OCI-LY7 (cell line): ENCODE measurements at regions of chr3 and their contacts with region 1.

Region 1: DNA sequence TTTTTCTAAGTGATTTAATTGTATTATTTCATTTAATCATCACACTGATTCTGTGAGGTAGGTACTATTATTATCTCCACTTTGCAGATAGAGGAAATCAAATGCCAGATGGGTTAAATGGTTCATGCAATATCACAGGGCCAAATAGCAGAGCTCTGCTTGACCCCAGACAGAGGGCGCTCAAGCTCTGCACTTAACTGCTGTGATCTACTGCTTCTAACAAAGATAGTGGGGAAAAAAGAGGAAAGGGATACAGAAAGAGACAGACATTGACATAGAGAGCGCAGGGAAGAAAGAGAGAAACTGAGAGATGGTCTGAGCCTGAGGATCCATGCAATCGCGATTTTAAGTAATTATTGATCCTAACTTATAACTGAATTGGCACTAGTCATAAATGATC is 279.1 kb upstream of the THRB start:
- DNase-seq: peak; percentile 42
- H3K4me3 ChIP-seq: no peak overlapping the region
- H3K27ac ChIP-seq: no peak overlapping the region
- H3K4me1 ChIP-seq: no peaks in the 10 kb centered on the region
- CTCF ChIP-seq: peak; percentile 84

Region 2: DNA sequence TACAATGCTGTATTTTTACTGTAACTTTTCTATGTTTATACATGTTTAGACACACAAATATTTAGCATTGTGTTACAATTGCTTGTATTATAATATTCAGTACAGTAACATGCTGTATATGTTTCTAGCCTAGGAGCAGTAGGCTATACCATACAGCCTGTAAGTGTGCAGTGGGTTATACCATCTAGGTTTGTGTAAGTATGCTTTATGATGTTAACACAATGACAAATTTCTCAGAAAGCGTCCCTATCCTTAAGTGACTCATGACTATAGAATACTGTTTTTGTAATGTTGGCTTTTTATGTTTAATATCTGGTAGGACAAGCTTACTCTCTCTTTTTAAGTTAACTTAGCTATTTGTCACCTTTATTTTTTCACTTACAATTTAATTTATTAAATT is 151.7 kb before region 1 on chr3:
- CTCF ChIA-PET with region 1: no interaction called
- POLR2A ChIA-PET with region 1: no interaction called
- intact Hi-C with region 1: no loop called
- DNase-seq: no peak
- H3K4me3 ChIP-seq: no peak overlapping the region
- H3K27ac ChIP-seq: no peak overlapping the region
- H3K4me1 ChIP-seq: no peaks in the 10 kb centered on the region
- CTCF ChIP-seq: no peak

Region 3: GRCh38 chr3:25033407-25034029 is 259.7 kb after region 1 on chr3:
- CTCF ChIA-PET with region 1: no interaction called
- POLR2A ChIA-PET with region 1: no interaction called
- intact Hi-C with region 1: loop called (anchors 10 kb)
- DNase-seq: peak; percentile 56
- H3K4me3 ChIP-seq: no peak overlapping the region
- H3K27ac ChIP-seq: no peak overlapping the region
- H3K4me1 ChIP-seq: no peaks in the 10 kb centered on the region
- CTCF ChIP-seq: peak; percentile 79